ENCODE measurements at regions of chr17 and their contacts with region 1.

Region 1: GRCh38 chr17:17783116-17783824 is 53.5 kb downstream of the SREBF1 start:
- DNase-seq: no peak
- ATAC-seq: peak; percentile 44
- H3K4me3 ChIP-seq: peak overlapping the region; percentile 41 to 57
- H3K27ac ChIP-seq: peak overlapping the region; percentile 59
- H3K4me1 ChIP-seq: peaks cover 64% of the 10 kb centered on the region
- H3K27me3 ChIP-seq: no peaks in the 10 kb centered on the region
- CTCF ChIP-seq: peak; percentile 70; the same call in 1 of the 2 replicates

Region 2: GRCh38 chr17:17681187-17681848 is 102.0 kb before region 1 on chr17 and contains the start of gene RAI1:
- CTCF ChIA-PET with region 1: interaction called, 4 read pairs
- POLR2A ChIA-PET with region 1: no interaction called
- in situ Hi-C with region 1: no loop called
- intact Hi-C with region 1: loop called (anchors 10 kb)
- DNase-seq: no peak
- ATAC-seq: peak; percentile 65
- H3K4me3 ChIP-seq: peak within 1 kb of the TSS; percentile 63 to 64
- H3K27ac ChIP-seq: peak within 1 kb of the TSS; percentile 97
- H3K4me1 ChIP-seq: peaks cover 35% of the 10 kb centered on the region
- H3K27me3 ChIP-seq: no peaks in the 10 kb centered on the region
- CTCF ChIP-seq: peak; percentile 96
- total RNA-seq, gene RAI1: 51.0 TPM

Region 3: GRCh38 chr17:17766077-17766743 is 17.1 kb before region 1 on chr17:
- CTCF ChIA-PET with region 1: no interaction called
- POLR2A ChIA-PET with region 1: no interaction called
- in situ Hi-C with region 1: no loop called
- intact Hi-C with region 1: no loop called
- DNase-seq: no peak
- ATAC-seq: no peak
- H3K4me3 ChIP-seq: no peak overlapping the region
- H3K27ac ChIP-seq: no peak overlapping the region
- H3K4me1 ChIP-seq: peaks cover 24% of the 10 kb centered on the region
- H3K27me3 ChIP-seq: no peaks in the 10 kb centered on the region
- CTCF ChIP-seq: no peak

Region 4: DNA sequence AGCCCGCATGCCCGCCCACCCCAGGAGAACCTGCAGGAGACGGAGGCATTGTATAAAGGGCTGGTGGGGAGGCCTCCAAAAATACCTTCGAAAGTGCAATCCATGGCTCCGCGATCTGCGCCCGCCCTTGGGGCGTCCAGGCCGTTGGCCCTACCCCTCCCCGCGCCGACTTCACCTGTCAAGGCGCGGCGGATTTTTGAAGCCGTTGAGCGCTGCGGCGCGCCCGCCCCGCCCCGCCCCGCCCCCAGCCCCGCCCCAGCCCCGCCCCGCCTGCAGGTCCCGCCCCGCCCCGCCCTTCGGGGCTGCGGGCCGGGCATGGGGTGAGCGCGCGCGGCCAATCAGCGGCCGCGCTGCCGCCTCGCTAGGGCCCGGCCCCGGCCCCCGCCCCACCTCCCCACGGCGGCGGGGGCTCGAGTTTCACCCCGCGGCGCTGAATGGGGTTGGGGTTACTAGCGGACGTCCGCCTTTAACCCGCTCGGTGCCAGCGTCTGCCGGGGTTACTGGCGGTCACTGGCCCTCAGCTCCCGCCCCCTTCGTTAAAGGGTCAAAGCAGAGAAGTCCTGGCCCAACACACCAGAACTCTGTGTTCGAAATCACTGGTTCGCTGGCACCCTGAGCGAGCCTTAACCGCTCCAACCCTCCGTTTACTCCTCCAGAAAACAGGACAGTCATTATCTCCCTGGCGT is 40.3 kb after region 1 on chr17:
- CTCF ChIA-PET with region 1: no interaction called
- POLR2A ChIA-PET with region 1: interaction called, 10 read pairs
- in situ Hi-C with region 1: no loop called
- intact Hi-C with region 1: no loop called
- DNase-seq: no peak
- ATAC-seq: peak; percentile 88
- H3K4me3 ChIP-seq: peak overlapping the region; percentile 49 to 65
- H3K27ac ChIP-seq: peak overlapping the region; percentile 96
- H3K4me1 ChIP-seq: peaks cover 89% of the 10 kb centered on the region
- H3K27me3 ChIP-seq: no peaks in the 10 kb centered on the region
- CTCF ChIP-seq: no peak

Region 5: GRCh38 chr17:18033442-18034099 is 250.3 kb after region 1 on chr17:
- CTCF ChIA-PET with region 1: no interaction called
- POLR2A ChIA-PET with region 1: interaction called, 21 read pairs
- in situ Hi-C with region 1: no loop called
- intact Hi-C with region 1: no loop called
- DNase-seq: peak; percentile 68
- ATAC-seq: peak; percentile 96
- H3K4me3 ChIP-seq: no peak overlapping the region
- H3K27ac ChIP-seq: no peak overlapping the region
- H3K4me1 ChIP-seq: peaks cover 7% of the 10 kb centered on the region
- H3K27me3 ChIP-seq: no peaks in the 10 kb centered on the region
- CTCF ChIP-seq: peak; percentile 29